Sciatic nerve (tissue), 2 donors: ENCODE measurements at regions of chr1 and their contacts with region 1.

Region 1: GRCh38 chr1:178501705-178502329 is 5.1 kb upstream of the CLEC20A start:
- DNase-seq: peak; percentile 85
- ATAC-seq: peak; percentile 85

Region 2: DNA sequence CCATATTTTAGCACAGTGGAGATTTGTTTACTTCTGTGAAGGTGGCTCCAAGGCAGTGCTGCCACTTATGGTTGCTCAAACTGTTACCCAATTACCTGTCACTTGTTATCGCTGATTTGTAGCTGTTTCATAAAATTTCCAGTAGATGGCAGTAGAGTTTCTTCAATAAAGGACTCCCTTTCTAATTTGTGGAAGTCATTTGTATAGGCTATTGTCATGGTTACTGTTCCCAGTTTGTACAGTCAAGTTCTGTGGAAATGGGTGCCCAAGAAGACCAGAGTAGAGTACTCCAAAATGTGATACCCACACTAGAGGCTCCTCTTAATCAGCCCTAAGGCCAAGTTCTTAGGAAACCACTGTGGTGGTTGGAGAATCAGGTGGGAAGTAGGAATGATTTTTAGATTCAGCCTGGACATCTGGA is 191.1 kb before region 1 on chr1:
- intact Hi-C with region 1: loop called (anchors 5 kb)
- DNase-seq: no peak
- ATAC-seq: peak; percentile 84

Region 3: DNA sequence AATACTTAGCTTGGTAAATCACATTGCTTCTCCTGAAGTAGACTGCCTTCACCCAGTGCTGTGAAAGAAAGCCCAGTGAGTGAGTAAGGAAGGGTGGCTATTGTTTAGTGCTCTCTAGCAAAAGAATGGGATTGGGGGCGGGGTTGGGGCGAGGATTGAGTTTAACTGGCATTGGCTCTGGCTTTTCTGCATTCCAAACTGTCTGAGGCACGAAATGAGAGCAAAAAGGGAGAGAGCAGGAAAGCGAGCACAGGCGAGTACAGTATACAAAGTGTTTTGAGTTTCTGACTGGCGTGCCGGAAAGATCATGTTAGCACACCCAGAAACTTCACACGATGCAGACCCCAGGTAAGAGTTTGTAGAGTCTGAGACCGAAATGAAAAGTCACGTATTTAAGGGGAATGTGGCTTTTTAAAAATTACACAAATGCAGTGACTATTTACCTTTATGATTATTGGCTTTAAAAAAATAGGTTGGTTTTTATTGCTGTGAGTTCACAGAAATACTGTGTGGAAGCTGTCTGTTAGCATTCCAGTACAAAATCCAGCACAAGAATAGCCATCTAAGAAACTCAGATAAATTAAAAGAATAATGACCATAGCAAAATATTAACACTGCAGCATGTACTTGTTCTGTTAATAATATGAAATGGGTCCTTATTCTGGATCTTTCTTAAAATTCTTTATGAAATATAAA is 160.4 kb before region 1 on chr1:
- intact Hi-C with region 1: no loop called
- DNase-seq: peak; percentile 63
- ATAC-seq: peak; percentile 59